ENCODE measurements at regions of chr11 and their contacts with region 1.

Region 1: DNA sequence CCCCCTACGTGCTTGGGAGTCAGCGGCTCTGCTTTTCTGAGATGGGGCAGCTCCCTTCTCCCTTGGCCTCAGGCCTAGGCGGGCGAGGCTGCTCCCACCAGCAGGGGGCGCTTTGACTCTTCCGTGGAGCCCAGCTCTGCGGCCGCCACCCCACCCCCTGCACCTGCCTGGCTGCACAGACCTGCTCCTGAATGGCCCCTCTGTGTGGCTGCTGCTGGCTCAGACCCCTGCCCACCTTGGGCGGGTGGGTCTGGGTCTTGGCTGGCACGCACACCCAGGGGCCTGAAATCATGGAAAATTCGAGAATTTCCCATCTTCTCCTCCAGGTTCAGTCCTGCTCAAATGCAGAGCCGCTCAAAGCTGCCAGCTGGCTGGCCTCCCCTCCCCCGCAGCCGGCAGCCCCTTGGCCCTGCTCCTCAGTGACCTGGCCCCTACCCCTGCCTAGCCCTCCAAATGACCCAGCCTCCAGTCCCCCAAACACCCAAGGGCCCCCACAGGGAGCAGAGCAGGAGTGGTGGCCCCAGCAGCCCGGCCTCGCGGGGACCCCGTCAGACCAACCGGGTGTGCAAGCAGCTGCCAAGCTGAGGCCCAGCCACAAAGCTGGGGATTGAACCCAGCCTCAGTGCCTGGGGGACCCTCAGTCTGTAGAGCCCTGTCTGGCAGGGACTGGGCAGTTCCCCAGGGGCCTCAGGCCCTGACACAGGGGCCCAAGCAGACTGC is 9.0 kb downstream of the PRR33 start:
- DNase-seq: peak; percentile 90
- CTCF ChIP-seq: peak; percentile 96

Region 2: GRCh38 chr11:1845561-1846452 is 36.9 kb before region 1 on chr11:
- CTCF ChIA-PET with region 1: interaction called, 38 read pairs
- POLR2A ChIA-PET with region 1: no interaction called
- DNase-seq: no peak
- CTCF ChIP-seq: no peak

Region 3: DNA sequence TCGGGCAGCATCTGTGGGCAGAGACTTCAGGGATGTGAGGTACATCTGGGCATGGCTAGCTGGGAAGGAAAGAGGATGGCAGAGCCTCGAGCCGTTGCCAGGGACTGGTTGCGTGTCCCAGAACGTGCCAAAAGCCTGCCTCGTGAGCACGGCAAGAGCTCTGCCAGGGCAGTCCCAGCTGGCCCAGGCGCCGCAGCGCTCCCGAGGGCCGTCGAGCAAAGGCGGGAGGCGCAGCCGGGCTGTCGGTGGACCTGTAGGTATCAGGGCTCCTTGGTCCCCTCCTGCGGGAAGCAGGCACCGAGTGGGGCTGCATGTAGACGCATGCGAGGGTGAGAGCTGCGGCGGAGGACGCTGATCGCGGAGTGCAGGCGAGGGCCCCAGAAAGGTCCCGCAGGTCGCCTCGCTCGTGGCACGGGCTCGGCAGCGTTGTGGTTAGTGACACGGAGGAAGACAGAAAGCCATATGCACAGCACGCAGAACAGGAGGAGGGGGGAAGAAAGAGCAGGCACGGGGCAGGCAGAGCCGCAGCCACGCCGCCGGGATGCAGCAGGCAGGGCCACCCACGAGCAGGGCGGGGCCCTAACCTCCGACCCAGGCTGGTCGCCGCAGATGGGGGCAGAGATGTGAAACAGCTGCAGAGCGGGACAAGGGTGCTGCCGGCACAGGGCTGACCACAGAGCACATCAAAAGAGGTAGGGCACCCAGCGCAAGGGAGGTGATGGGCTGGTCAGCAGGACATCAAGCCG is 11.8 kb before region 1 on chr11:
- CTCF ChIA-PET with region 1: interaction called, 16 read pairs
- POLR2A ChIA-PET with region 1: interaction called, 3 read pairs
- DNase-seq: no peak
- CTCF ChIP-seq: no peak

Region 4: GRCh38 chr11:1908618-1909017 is 25.9 kb after region 1 on chr11:
- CTCF ChIA-PET with region 1: interaction called, 13 read pairs
- POLR2A ChIA-PET with region 1: no interaction called
- DNase-seq: no peak
- CTCF ChIP-seq: peak; percentile 4

Region 5: DNA sequence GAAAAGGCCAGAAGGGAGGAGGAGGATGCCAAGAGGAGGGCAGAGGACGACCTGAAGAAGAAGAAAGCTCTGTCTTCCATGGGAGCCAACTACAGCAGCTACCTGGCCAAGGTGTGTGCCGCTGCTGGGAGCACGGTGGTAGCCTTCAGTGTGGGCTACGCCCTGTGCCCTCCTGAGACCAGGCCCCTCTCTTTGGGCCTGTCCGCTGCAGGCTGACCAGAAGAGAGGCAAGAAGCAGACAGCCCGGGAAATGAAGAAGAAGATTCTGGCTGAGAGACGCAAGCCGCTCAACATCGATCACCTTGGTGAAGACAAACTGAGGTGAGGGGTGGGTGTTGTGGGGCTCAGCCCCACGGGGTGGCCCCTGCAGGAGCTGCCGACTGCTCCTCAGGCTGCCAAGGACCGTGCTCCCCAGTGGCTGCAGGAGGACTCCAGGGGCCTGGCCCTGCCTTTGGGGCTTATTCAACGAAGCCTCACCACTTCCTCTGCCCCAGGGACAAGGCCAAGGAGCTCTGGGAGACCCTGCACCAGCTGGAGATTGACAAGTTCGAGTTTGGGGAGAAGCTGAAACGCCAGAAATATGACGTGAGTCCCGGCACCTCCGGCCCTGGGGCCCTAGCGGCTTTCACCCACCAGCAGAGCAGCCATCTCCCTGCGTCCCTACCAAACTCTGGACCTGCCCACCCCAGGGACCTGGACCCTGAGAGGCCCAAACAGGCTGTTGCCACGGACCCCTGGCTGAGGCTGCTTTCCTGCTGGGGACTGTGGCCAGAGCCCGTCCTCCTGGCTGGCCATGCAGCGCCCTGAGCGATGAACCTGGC is 51.9 kb after region 1 on chr11:
- CTCF ChIA-PET with region 1: interaction called, 10 read pairs
- POLR2A ChIA-PET with region 1: no interaction called
- DNase-seq: no peak
- CTCF ChIP-seq: no peak

Region 6: GRCh38 chr11:2002807-2003206 is 120.1 kb after region 1 on chr11:
- CTCF ChIA-PET with region 1: interaction called, 17 read pairs
- POLR2A ChIA-PET with region 1: no interaction called
- DNase-seq: no peak
- CTCF ChIP-seq: no peak

Measured in GM10248 (cell line).